ENCODE measurements at regions of chr10 and their contacts with region 1.

Region 1: GRCh38 chr10:44398747-44399658 is 14.1 kb upstream of the CXCL12 start:
- DNase-seq: no peak
- H3K4me3 ChIP-seq: no peak overlapping the region
- H3K4me3 Mint-ChIP-seq: no peak overlapping the region
- H3K27ac Mint-ChIP-seq: no peak overlapping the region
- H3K4me1 ChIP-seq: no peaks in the 10 kb centered on the region
- H3K4me1 Mint-ChIP-seq: no peaks in the 10 kb centered on the region
- H3K27me3 ChIP-seq: no peaks in the 10 kb centered on the region
- H3K27me3 Mint-ChIP-seq: peaks cover 15% of the 10 kb centered on the region
- CTCF ChIP-seq: no peak

Region 2: GRCh38 chr10:44233561-44234482 is 165.2 kb before region 1 on chr10:
- CTCF ChIA-PET with region 1: no interaction called
- POLR2A ChIA-PET with region 1: no interaction called
- intact Hi-C with region 1: no loop called
- DNase-seq: peak; percentile 28 to 67
- H3K4me3 ChIP-seq: no peak overlapping the region
- H3K4me3 Mint-ChIP-seq: no peak overlapping the region
- H3K27ac Mint-ChIP-seq: no peak overlapping the region
- H3K4me1 ChIP-seq: peaks cover 4% of the 10 kb centered on the region; the same call in 1 of the 2 replicates
- H3K4me1 Mint-ChIP-seq: no peaks in the 10 kb centered on the region
- H3K27me3 ChIP-seq: no peaks in the 10 kb centered on the region
- H3K27me3 Mint-ChIP-seq: peaks cover 3% of the 10 kb centered on the region
- CTCF ChIP-seq: no peak

Region 3: GRCh38 chr10:44325157-44325556 is 73.8 kb before region 1 on chr10:
- CTCF ChIA-PET with region 1: no interaction called
- POLR2A ChIA-PET with region 1: no interaction called
- intact Hi-C with region 1: no loop called
- DNase-seq: peak; percentile 60 to 64
- H3K4me3 ChIP-seq: no peak overlapping the region
- H3K4me3 Mint-ChIP-seq: no peak overlapping the region
- H3K27ac Mint-ChIP-seq: no peak overlapping the region
- H3K4me1 ChIP-seq: peaks cover 11% of the 10 kb centered on the region
- H3K4me1 Mint-ChIP-seq: peaks cover 18% of the 10 kb centered on the region
- H3K27me3 ChIP-seq: no peaks in the 10 kb centered on the region
- H3K27me3 Mint-ChIP-seq: no peaks in the 10 kb centered on the region
- CTCF ChIP-seq: no peak

Region 4: DNA sequence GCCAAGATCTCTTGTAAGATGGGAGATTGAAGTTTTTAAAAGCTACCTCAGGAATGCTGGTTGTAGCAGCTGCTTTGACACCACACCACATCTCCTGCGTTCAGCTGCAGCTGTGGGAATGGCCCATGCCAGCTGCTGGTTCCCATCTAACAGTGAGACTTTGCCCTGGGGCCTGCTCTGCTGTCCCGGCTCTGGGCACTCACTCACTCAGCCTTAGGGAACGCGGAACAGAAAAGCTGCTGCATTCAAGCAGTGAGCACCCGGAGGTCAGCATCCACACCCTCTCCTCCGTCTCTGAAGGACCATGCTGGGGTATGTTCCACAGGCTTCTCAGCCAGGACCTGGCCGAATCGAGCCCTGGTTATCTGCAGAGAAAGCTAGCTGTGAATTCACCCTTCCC is 183.0 kb after region 1 on chr10:
- CTCF ChIA-PET with region 1: no interaction called
- POLR2A ChIA-PET with region 1: no interaction called
- intact Hi-C with region 1: loop called (anchors 10 kb)
- DNase-seq: no peak
- H3K4me3 ChIP-seq: no peak overlapping the region
- H3K4me3 Mint-ChIP-seq: no peak overlapping the region
- H3K27ac Mint-ChIP-seq: no peak overlapping the region
- H3K4me1 ChIP-seq: no peaks in the 10 kb centered on the region
- H3K4me1 Mint-ChIP-seq: no peaks in the 10 kb centered on the region
- H3K27me3 ChIP-seq: peaks cover 1% of the 10 kb centered on the region; the same call in 1 of the 2 replicates
- H3K27me3 Mint-ChIP-seq: peaks cover 9% of the 10 kb centered on the region
- CTCF ChIP-seq: no peak